Transverse colon (tissue), 4 donors: ENCODE measurements at regions of chr2 and their contacts with region 1.

Region 1: GRCh38 chr2:177148477-177149154 is 64.0 kb upstream of the HNRNPA3 start:
- DNase-seq: peak; percentile 84
- H3K4me3 ChIP-seq: peak overlapping the region in 3 of 4 donors; percentile 19 to 46 (median 23)
- H3K27ac ChIP-seq: no peak overlapping the region
- H3K4me1 ChIP-seq: peaks cover 0 to 11% (median 9%) of the 10 kb centered on the region in 4 donors
- H3K27me3 ChIP-seq: peaks cover 23% of the 10 kb centered on the region
- CTCF ChIP-seq: peak; percentile 71 to 89 (median 79)
- EP300 ChIP-seq: no peak
- POLR2A ChIP-seq: no peak

Region 2: GRCh38 chr2:176110975-176111663 is 1037.5 kb before region 1 on chr2:
- in situ Hi-C with region 1: loop called in 2 of 4 experiments (anchors 25 kb)
- intact Hi-C with region 1: no loop called
- DNase-seq: peak; percentile 69
- H3K4me3 ChIP-seq: no peak overlapping the region
- H3K27ac ChIP-seq: peak overlapping the region in 2 of 4 donors; percentile 37 to 69
- H3K4me1 ChIP-seq: peaks cover 8 to 43% (median 16%) of the 10 kb centered on the region in 4 donors
- H3K27me3 ChIP-seq: peaks cover 98% of the 10 kb centered on the region
- CTCF ChIP-seq: peak; percentile 56 to 68 (median 58)
- EP300 ChIP-seq: no peak
- POLR2A ChIP-seq: no peak

Region 3: GRCh38 chr2:176653479-176654443 is 494.9 kb before region 1 on chr2:
- in situ Hi-C with region 1: loop called in 3 of 4 experiments (anchors 25 kb)
- intact Hi-C with region 1: loop called (anchors 10 kb)
- DNase-seq: peak; percentile 70
- H3K4me3 ChIP-seq: no peak overlapping the region
- H3K27ac ChIP-seq: peak overlapping the region in 1 of 4 donors; percentile 42
- H3K4me1 ChIP-seq: peaks cover 0 to 8% (median 0%) of the 10 kb centered on the region in 4 donors
- H3K27me3 ChIP-seq: peaks cover 12% of the 10 kb centered on the region
- CTCF ChIP-seq: peak; percentile 66 to 82 (median 74)
- EP300 ChIP-seq: no peak
- POLR2A ChIP-seq: no peak

Region 4: GRCh38 chr2:176814306-176815052 is 334.1 kb before region 1 on chr2:
- in situ Hi-C with region 1: loop called in 1 of 4 experiments (anchors 25 kb)
- intact Hi-C with region 1: no loop called
- DNase-seq: no peak
- H3K4me3 ChIP-seq: no peak overlapping the region
- H3K27ac ChIP-seq: no peak overlapping the region
- H3K4me1 ChIP-seq: no peaks in the 10 kb centered on the region
- H3K27me3 ChIP-seq: no peaks in the 10 kb centered on the region
- CTCF ChIP-seq: peak; percentile 58 to 71 (median 60)
- EP300 ChIP-seq: no peak
- POLR2A ChIP-seq: no peak

Region 5: GRCh38 chr2:176830362-176830761 is 318.3 kb before region 1 on chr2:
- in situ Hi-C with region 1: loop called in 1 of 4 experiments (anchors 25 kb)
- intact Hi-C with region 1: no loop called
- DNase-seq: no peak
- H3K4me3 ChIP-seq: no peak overlapping the region
- H3K27ac ChIP-seq: no peak overlapping the region
- H3K4me1 ChIP-seq: no peaks in the 10 kb centered on the region
- H3K27me3 ChIP-seq: peaks cover 3% of the 10 kb centered on the region
- CTCF ChIP-seq: no peak
- EP300 ChIP-seq: no peak
- POLR2A ChIP-seq: no peak